ENCODE measurements at regions of chr22 and their contacts with region 1.

Region 1: GRCh38 chr22:40922484-40923303 is 28.5 kb upstream of the RBX1 start:
- DNase-seq: peak; percentile 8
- ATAC-seq: peak; percentile 92
- H3K4me3 Mint-ChIP-seq: no peak overlapping the region
- H3K27ac Mint-ChIP-seq: peak overlapping the region; percentile 13
- H3K4me1 Mint-ChIP-seq: peaks cover 4% of the 10 kb centered on the region
- H3K27me3 Mint-ChIP-seq: no peaks in the 10 kb centered on the region
- CTCF ChIP-seq: peak; percentile 86

Region 2: DNA sequence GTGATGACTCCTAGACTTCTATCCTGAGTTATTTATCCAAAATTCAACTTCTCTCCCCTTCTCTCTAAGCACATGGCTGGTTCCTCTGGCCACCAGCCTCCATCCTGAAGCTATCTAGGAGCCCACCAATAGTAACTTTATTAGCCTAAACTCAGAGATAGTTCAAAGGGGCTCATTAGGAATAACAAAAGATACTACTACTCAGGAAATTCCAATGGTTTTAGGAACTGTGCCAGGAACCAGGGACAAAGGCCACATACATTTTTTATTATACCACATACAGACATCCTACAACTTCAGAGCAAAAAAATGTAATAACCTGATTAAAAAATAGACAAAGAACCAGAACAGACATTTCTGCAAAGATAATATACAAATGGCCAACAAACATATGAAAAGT is 131.5 kb before region 1 on chr22:
- CTCF ChIA-PET with region 1: no interaction called
- POLR2A ChIA-PET with region 1: no interaction called
- intact Hi-C with region 1: no loop called
- DNase-seq: no peak
- ATAC-seq: no peak
- H3K4me3 Mint-ChIP-seq: no peak overlapping the region
- H3K27ac Mint-ChIP-seq: no peak overlapping the region
- H3K4me1 Mint-ChIP-seq: peaks cover 20% of the 10 kb centered on the region
- H3K27me3 Mint-ChIP-seq: no peaks in the 10 kb centered on the region
- CTCF ChIP-seq: no peak

Region 3: DNA sequence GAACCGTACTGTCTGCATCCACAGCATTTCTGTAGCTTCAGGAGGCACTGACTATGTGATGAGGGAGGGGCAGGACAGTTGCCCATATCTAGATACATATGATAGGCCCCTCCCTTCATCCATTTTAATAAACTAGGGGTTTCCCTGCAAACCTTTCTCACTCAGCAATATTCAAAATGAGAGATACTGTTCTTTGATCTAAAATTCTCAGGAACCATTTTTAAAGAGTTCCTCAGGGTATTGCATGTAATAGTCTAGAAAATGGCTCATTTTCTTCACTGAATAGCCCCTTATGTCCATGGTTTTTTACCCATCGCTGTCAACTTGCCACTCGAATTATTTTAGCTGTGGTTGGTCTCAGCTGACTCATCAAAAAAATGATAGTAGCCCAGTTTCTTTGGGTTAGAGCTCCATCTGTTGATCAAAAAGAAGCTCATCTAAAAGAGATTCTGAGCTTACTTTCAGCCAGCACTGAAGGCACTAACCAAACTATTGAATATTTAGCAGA is 23.8 kb before region 1 on chr22:
- CTCF ChIA-PET with region 1: interaction called, 19 read pairs
- POLR2A ChIA-PET with region 1: no interaction called
- intact Hi-C with region 1: no loop called
- DNase-seq: peak; percentile 19
- ATAC-seq: peak; percentile 91
- H3K4me3 Mint-ChIP-seq: peak overlapping the region; percentile 43
- H3K27ac Mint-ChIP-seq: peak overlapping the region; percentile 80
- H3K4me1 Mint-ChIP-seq: peaks cover 10% of the 10 kb centered on the region
- H3K27me3 Mint-ChIP-seq: no peaks in the 10 kb centered on the region
- CTCF ChIP-seq: peak; percentile 75

Region 4: DNA sequence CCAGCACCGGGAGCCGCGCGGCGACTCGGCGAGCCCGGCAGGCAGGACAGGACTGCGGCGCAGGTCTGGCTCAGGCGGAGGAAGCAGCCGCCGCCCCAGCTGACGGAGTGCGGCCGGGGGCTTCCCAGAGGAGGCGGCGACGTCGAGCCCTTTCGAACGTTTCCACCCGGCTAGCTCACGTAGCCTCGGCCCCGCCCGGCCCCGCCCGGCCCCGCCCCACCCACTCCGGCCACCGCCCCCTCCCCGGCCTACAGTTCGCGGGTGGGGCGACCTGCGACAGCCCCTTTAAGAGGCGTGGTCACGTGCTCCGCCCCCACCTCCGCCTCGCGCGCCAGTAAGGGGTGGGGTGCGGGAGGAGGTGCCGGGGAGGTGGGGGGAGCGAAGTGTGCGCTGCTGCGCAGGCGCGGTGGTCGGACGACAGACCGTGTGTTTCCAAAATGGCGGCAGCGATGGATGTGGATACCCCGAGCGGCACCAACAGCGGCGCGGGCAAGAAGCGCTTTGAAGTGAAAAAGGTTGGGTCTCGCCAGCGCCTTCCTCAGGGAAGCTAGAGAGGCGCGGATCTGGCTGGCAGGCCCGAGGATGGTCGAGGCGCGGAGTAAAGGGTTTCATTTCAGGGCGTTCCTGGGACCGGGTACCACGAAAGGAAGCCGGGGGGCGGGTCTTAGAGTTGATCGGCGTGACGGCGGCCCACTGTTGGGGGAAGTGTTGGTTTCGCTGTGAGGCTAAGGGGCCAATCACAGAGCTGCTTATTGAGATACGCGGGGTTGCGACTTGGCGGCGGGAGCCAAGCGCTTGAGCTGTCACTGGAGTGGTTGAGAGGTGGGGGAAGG is 28.5 kb after region 1 on chr22 and contains the start of gene RBX1:
- CTCF ChIA-PET with region 1: interaction called, 14 read pairs
- POLR2A ChIA-PET with region 1: interaction called, 3 read pairs
- intact Hi-C with region 1: no loop called
- DNase-seq: peak; percentile 99
- ATAC-seq: peak; percentile 87
- H3K4me3 Mint-ChIP-seq: peak within 1 kb of the TSS; percentile 98
- H3K27ac Mint-ChIP-seq: peak within 1 kb of the TSS; percentile 100
- H3K4me1 Mint-ChIP-seq: peaks cover 22% of the 10 kb centered on the region
- H3K27me3 Mint-ChIP-seq: no peaks in the 10 kb centered on the region
- CTCF ChIP-seq: no peak
- total RNA-seq, gene RBX1: 90.4 to 92.8 TPM

Region 5: GRCh38 chr22:41015003-41015402 is 92.3 kb after region 1 on chr22:
- CTCF ChIA-PET with region 1: no interaction called
- POLR2A ChIA-PET with region 1: no interaction called
- intact Hi-C with region 1: no loop called
- DNase-seq: no peak
- ATAC-seq: no peak
- H3K4me3 Mint-ChIP-seq: no peak overlapping the region
- H3K27ac Mint-ChIP-seq: no peak overlapping the region
- H3K4me1 Mint-ChIP-seq: no peaks in the 10 kb centered on the region
- H3K27me3 Mint-ChIP-seq: no peaks in the 10 kb centered on the region
- CTCF ChIP-seq: no peak

Region 6: DNA sequence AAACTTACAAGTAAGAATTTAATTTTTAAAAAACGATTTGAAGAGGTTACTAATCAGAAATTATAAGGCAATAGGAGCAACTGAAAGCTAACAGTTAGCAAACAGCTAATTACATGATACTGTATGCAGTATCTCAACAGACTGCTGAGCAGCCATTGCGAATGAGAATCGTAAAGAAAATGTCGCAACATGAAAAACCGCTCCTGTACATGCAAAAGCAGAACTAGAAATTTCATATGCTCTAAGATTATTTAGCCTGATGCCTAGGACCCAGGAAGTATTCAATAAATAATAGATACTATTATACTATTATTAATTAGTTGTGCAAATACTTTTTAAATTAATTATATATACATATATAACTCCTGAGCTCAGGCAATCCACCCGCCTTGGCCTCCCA is 121.0 kb after region 1 on chr22:
- CTCF ChIA-PET with region 1: interaction called, 12 read pairs
- POLR2A ChIA-PET with region 1: no interaction called
- intact Hi-C with region 1: no loop called
- DNase-seq: no peak
- ATAC-seq: no peak
- H3K4me3 Mint-ChIP-seq: no peak overlapping the region
- H3K27ac Mint-ChIP-seq: no peak overlapping the region
- H3K4me1 Mint-ChIP-seq: no peaks in the 10 kb centered on the region
- H3K27me3 Mint-ChIP-seq: no peaks in the 10 kb centered on the region
- CTCF ChIP-seq: no peak

Region 7: DNA sequence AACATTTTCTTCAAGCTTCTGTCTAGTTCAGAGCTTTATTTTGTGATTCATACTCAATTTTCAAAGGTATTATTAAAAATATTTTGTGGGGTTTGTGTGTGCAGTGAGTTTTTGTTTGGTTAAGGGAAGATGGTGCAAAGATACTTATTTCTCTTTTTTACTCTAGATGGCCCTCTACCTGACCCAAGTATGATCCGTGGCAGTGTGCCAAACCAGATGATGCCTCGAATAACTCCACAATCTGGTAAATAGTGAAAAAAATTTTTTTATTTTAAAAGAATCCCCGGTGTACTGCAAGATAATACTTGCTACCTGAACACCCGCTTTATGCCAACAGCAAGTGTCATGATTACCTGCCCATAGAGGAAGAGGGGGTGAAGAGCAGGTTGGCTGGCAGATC is 223.9 kb after region 1 on chr22:
- CTCF ChIA-PET with region 1: interaction called, 10 read pairs
- POLR2A ChIA-PET with region 1: no interaction called
- intact Hi-C with region 1: no loop called
- DNase-seq: no peak
- ATAC-seq: no peak
- H3K4me3 Mint-ChIP-seq: no peak overlapping the region
- H3K27ac Mint-ChIP-seq: no peak overlapping the region
- H3K4me1 Mint-ChIP-seq: no peaks in the 10 kb centered on the region
- H3K27me3 Mint-ChIP-seq: no peaks in the 10 kb centered on the region
- CTCF ChIP-seq: no peak

Measured in activated CD8-positive, alpha-beta T cell treated with anti-CD3 and anti-CD28 coated beads for 36 hours (primary cell).